Spleen (tissue), 13 donors: ENCODE measurements at regions of chr17 and their contacts with region 1.

Region 1: GRCh38 chr17:38415250-38416194 is 12.7 kb upstream of the ARHGAP23 start:
- DNase-seq: no peak
- H3K4me3 ChIP-seq: no peak overlapping the region
- H3K27ac ChIP-seq: peak overlapping the region in 1 of 8 donors; percentile 10
- H3K4me1 ChIP-seq: peaks cover 5 to 56% (median 33%) of the 10 kb centered on the region in 6 donors
- H3K27me3 ChIP-seq: peaks cover 0 to 57% (median 21%) of the 10 kb centered on the region in 7 donors
- CTCF ChIP-seq: no peak
- POLR2A ChIP-seq: no peak

Region 2: GRCh38 chr17:38349097-38349730 is 66.3 kb before region 1 on chr17:
- intact Hi-C with region 1: loop called (anchors 2 kb)
- DNase-seq: peak; percentile 92
- H3K4me3 ChIP-seq: no peak overlapping the region
- H3K27ac ChIP-seq: no peak overlapping the region
- H3K4me1 ChIP-seq: peaks cover 6 to 37% (median 22%) of the 10 kb centered on the region in 6 donors
- H3K27me3 ChIP-seq: no peaks in the 10 kb centered on the region
- CTCF ChIP-seq: peak; percentile 65 to 96 (median 86)
- POLR2A ChIP-seq: no peak